ENCODE measurements at regions of chr6 and their contacts with region 1.

Region 1: GRCh38 chr6:26196846-26197648 is 109.8 kb downstream of the HFE start:
- DNase-seq: peak; percentile 94
- H3K4me3 Mint-ChIP-seq: peak overlapping the region; percentile 93
- H3K27ac Mint-ChIP-seq: peak overlapping the region; percentile 96
- H3K4me1 Mint-ChIP-seq: peaks cover 28% of the 10 kb centered on the region
- H3K27me3 Mint-ChIP-seq: no peaks in the 10 kb centered on the region
- CTCF ChIP-seq: no peak

Region 2: GRCh38 chr6:26003102-26003694 is 193.8 kb before region 1 on chr6:
- CTCF ChIA-PET with region 1: no interaction called
- POLR2A ChIA-PET with region 1: no interaction called
- intact Hi-C with region 1: no loop called
- DNase-seq: peak; percentile 64
- H3K4me3 Mint-ChIP-seq: no peak overlapping the region
- H3K27ac Mint-ChIP-seq: no peak overlapping the region
- H3K4me1 Mint-ChIP-seq: peaks cover under 1% of the 10 kb centered on the region
- H3K27me3 Mint-ChIP-seq: no peaks in the 10 kb centered on the region
- CTCF ChIP-seq: peak; percentile 63

Region 3: GRCh38 chr6:26103770-26104456 is 93.1 kb before region 1 on chr6:
- CTCF ChIA-PET with region 1: interaction called, 3 read pairs
- POLR2A ChIA-PET with region 1: interaction called, 72 read pairs
- intact Hi-C with region 1: no loop called
- DNase-seq: peak; percentile 96
- H3K4me3 Mint-ChIP-seq: peak overlapping the region; percentile 75
- H3K27ac Mint-ChIP-seq: peak overlapping the region; percentile 92
- H3K4me1 Mint-ChIP-seq: peaks cover 11% of the 10 kb centered on the region
- H3K27me3 Mint-ChIP-seq: no peaks in the 10 kb centered on the region
- CTCF ChIP-seq: peak; percentile 41

Region 4: DNA sequence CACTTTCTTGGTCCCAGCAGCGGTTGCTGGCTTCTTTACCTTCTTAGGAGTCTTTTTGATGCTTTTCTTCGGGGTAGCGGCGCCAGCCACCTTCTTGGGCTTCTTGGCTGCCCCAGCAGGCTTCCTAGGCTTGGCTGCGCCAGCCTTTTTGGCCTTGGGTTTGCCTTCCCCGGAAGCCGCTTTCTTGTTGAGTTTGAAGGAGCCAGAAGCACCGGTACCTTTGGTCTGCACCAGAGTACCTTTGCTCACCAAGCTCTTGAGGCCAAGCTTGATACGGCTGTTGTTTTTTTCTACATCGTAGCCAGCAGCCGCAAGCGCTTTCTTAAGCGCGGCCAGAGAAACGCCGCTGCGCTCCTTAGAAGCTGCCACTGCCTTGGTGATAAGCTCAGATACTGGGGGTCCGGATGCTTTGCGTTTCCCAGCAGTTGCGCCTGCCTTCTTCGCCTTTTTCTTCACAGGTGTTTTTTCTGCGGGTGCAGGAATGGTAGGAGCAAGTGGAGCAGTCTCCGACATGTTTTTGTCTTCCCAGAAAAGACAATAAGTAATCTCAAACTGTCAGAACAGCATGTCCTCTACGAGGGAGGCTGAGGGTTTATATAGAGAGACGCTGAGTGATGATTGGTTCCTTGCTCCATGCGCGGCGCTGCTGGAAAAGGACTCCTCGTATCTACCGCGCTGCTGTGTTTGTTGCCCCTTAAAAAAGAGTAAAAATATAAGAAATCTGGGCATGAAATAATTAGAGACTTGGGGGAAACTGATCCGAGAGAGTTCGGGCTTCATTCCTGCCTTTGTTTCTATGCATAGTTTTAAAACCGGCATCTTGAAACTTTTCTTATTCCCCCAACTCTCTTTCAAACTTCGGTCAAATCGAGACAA is 37.6 kb after region 1 on chr6:
- CTCF ChIA-PET with region 1: no interaction called
- POLR2A ChIA-PET with region 1: interaction called, 108 read pairs
- intact Hi-C with region 1: no loop called
- DNase-seq: peak; percentile 90
- H3K4me3 Mint-ChIP-seq: peak overlapping the region; percentile 82
- H3K27ac Mint-ChIP-seq: peak overlapping the region; percentile 85
- H3K4me1 Mint-ChIP-seq: peaks cover 32% of the 10 kb centered on the region
- H3K27me3 Mint-ChIP-seq: no peaks in the 10 kb centered on the region
- CTCF ChIP-seq: no peak

Region 5: GRCh38 chr6:26312501-26313390 is 115.7 kb after region 1 on chr6:
- CTCF ChIA-PET with region 1: no interaction called
- POLR2A ChIA-PET with region 1: interaction called, 12 read pairs
- intact Hi-C with region 1: no loop called
- DNase-seq: peak; percentile 82
- H3K4me3 Mint-ChIP-seq: peak overlapping the region; percentile 79
- H3K27ac Mint-ChIP-seq: peak overlapping the region; percentile 74
- H3K4me1 Mint-ChIP-seq: peaks cover 26% of the 10 kb centered on the region
- H3K27me3 Mint-ChIP-seq: no peaks in the 10 kb centered on the region
- CTCF ChIP-seq: no peak

Region 6: GRCh38 chr6:26394289-26394688 is 197.2 kb after region 1 on chr6:
- CTCF ChIA-PET with region 1: no interaction called
- POLR2A ChIA-PET with region 1: no interaction called
- intact Hi-C with region 1: no loop called
- DNase-seq: peak; percentile 94
- H3K4me3 Mint-ChIP-seq: no peak overlapping the region
- H3K27ac Mint-ChIP-seq: no peak overlapping the region
- H3K4me1 Mint-ChIP-seq: peaks cover 8% of the 10 kb centered on the region
- H3K27me3 Mint-ChIP-seq: no peaks in the 10 kb centered on the region
- CTCF ChIP-seq: no peak

Region 7: DNA sequence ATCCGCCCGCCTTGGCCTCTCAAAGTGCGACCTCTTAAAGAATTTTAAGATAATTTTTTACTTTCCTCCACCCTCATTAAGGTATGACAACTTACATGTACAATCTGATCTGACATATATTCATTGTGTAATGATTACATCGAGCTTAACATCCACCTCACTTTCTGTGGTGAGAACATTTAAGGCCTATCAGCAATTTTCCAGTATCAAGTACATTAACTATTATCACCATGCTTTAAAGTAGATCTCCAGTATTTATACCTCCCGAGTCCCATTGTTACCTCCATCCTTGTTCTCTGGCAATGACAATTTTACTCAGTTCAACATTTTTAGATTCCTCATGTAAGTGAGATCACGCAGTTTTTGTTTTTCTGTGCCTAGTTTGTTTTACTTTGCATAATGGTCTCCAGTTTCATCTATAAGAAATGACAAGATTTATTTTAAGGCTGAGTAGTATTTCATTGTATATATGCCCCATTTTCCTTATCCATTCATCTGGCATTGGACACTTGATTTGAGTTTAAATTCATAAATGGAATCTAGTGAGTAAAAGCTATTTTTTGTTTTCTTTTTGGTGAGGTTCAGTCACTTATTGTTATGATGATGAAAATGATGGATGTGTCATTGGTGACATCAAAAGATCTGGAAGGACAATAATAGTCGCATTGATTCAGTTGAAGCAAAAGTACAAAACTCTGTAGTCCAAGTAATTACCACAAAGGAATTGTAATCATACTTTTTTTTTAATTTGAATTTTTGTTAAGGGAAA is 1628.2 kb after region 1 on chr6:
- CTCF ChIA-PET with region 1: interaction called, 7 read pairs
- POLR2A ChIA-PET with region 1: interaction called, 55 read pairs
- intact Hi-C with region 1: no loop called
- DNase-seq: no peak
- H3K4me3 Mint-ChIP-seq: peak overlapping the region; percentile 94
- H3K27ac Mint-ChIP-seq: peak overlapping the region; percentile 95
- H3K4me1 Mint-ChIP-seq: peaks cover 10% of the 10 kb centered on the region
- H3K27me3 Mint-ChIP-seq: no peaks in the 10 kb centered on the region
- CTCF ChIP-seq: no peak

Region 8: DNA sequence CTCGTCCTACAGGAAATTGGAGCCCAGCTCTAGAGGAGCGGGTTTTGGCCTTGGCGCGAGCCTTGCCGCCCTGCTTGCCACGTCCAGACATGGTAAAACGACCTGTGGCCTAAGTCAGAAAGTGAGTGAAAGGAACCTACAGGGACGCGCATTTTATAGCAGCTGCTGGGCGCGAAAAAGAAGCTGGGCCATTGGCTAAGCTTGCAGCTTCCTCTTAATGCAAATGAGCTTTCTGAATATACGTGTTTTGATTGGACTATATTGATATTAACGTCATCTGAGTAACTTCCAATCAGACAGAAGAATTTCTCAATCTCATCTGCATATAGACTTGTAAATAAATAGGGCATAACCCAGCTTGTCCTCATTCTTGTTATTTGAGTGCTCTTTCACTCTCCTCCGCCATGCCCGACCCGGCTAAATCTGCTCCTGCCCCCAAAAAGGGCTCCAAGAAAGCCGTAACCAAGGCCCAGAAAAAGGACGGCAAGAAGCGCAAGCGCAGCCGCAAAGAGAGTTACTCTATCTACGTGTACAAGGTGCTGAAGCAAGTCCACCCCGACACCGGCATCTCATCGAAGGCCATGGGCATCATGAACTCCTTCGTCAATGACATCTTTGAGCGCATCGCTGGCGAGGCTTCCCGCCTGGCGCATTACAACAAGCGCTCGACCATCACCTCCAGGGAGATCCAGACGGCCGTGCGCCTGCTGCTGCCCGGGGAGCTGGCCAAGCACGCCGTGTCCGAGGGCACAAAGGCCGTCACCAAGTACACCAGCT is 1696.2 kb after region 1 on chr6:
- CTCF ChIA-PET with region 1: no interaction called
- POLR2A ChIA-PET with region 1: interaction called, 83 read pairs
- intact Hi-C with region 1: no loop called
- DNase-seq: peak; percentile 98
- H3K4me3 Mint-ChIP-seq: no peak overlapping the region
- H3K27ac Mint-ChIP-seq: no peak overlapping the region
- H3K4me1 Mint-ChIP-seq: peaks cover 12% of the 10 kb centered on the region
- H3K27me3 Mint-ChIP-seq: no peaks in the 10 kb centered on the region
- CTCF ChIP-seq: no peak

Measured in MCF 10A (cell line).